GM12878 (cell line): ENCODE measurements at regions of chr3 and their contacts with region 1.

Region 1: GRCh38 chr3:120245386-120245785 is 39.6 kb downstream of the GPR156 start:
- DNase-seq: no peak
- ATAC-seq: no peak
- H3K4me3 ChIP-seq: no peak overlapping the region
- H3K27ac ChIP-seq: no peak overlapping the region
- H3K4me1 ChIP-seq: no peaks in the 10 kb centered on the region
- H3K27me3 ChIP-seq: no peaks in the 10 kb centered on the region
- CTCF ChIP-seq: no peak
- EP300 ChIP-seq: no peak
- POLR2A ChIP-seq: no peak
- RAD21 ChIP-seq: no peak

Region 2: GRCh38 chr3:120357807-120358206 is 112.4 kb after region 1 on chr3:
- CTCF ChIA-PET with region 1: interaction called, 8 read pairs
- POLR2A ChIA-PET with region 1: no interaction called
- RAD21 ChIA-PET with region 1: interaction called, 6 read pairs
- SMC1A ChIA-PET with region 1: interaction called, 4 read pairs
- in situ Hi-C with region 1: no loop called
- intact Hi-C with region 1: loop called (anchors 1 kb)
- DNase-seq: no peak
- ATAC-seq: peak; percentile 40; the same call in 1 of the 3 replicates
- H3K4me3 ChIP-seq: no peak overlapping the region
- H3K27ac ChIP-seq: no peak overlapping the region
- H3K4me1 ChIP-seq: no peaks in the 10 kb centered on the region
- H3K27me3 ChIP-seq: peaks cover 0 to 2% of the 10 kb centered on the region in 2 experiments; a peak in 1 of 4 replicates
- CTCF ChIP-seq: peak in 1 of 3 experiments; percentile 27; a peak in 1 of 6 replicates
- EP300 ChIP-seq: no peak
- POLR2A ChIP-seq: no peak
- RAD21 ChIP-seq: 0 out of 2 replicates have a peak, but pooled peaks have one; percentile 27

Region 3: DNA sequence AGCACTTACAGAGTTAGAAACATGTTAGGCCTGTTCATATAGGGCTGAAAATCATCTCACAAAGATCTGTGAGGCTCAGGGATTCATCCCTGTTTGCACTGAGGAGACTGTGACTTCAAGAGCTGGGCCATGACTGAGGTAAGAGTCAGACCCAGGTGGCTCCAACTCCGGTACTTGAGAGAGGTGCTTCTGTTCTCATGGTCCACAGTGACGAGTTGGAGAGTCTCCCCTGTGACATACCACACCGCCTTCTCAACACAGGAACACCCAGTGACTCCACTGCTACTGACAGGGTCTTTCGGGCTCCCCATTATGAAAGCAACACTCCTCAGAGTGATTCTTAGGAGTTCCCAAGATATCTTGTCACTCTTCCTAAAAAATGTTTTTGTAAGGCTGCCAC is 178.0 kb after region 1 on chr3:
- CTCF ChIA-PET with region 1: interaction called, 210 read pairs
- POLR2A ChIA-PET with region 1: no interaction called
- RAD21 ChIA-PET with region 1: interaction called, 75 read pairs
- SMC1A ChIA-PET with region 1: interaction called, 90 read pairs
- in situ Hi-C with region 1: no loop called
- intact Hi-C with region 1: no loop called
- DNase-seq: no peak
- ATAC-seq: no peak
- H3K4me3 ChIP-seq: no peak overlapping the region
- H3K27ac ChIP-seq: no peak overlapping the region
- H3K4me1 ChIP-seq: no peaks in the 10 kb centered on the region
- H3K27me3 ChIP-seq: no peaks in the 10 kb centered on the region; a peak in 2 of 4 replicates
- CTCF ChIP-seq: no peak
- EP300 ChIP-seq: no peak
- POLR2A ChIP-seq: no peak
- RAD21 ChIP-seq: no peak

Region 4: DNA sequence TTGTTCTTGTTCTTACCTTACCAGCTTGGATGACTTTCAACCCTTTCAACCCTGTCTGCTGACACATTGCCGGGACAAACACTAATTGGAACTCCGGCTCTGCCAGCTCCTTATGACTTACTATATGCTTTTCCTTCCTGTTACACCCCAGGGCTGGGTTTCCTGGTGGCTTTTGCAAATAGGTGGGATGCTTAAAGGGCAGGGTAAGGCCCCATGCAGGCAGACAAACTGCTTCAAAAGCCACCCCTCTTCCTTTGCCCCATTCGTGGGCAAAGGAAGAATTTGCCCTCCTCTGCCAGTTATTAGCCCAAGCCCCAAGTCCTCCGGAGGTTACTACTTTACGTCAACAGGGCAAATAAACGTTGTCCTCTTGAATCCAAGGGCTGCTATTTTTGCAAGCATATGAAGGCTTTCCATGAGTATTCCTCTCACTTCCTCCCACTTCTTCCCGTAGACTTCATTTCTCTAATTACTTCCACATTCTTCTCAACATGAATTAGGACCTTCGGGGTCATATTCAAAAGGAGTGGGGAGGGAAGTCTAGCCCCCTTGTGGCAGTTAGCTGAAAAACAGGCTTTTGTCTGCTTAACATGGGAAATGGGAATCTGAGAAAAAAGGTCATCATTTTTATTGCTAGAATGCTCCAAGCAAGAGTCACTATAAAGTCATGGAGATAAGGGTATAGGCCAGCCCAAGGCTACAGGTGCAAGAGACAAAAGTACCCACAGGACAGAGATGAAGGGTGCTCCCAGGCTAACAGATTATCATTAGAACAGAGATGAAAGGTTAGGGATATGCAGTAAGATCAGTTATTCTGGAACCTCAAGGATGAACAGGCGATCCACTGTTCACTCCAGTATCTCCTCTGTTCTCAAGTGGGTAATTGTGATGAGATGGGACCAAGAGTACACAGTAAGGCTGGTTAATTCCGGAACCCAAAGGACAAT is 261.7 kb after region 1 on chr3:
- CTCF ChIA-PET with region 1: interaction called, 3 read pairs
- POLR2A ChIA-PET with region 1: no interaction called
- RAD21 ChIA-PET with region 1: no interaction called
- SMC1A ChIA-PET with region 1: no interaction called
- in situ Hi-C with region 1: no loop called
- intact Hi-C with region 1: loop called (anchors 1 kb)
- DNase-seq: no peak
- ATAC-seq: peak; percentile 59; the same call in 2 of the 3 replicates
- H3K4me3 ChIP-seq: no peak overlapping the region
- H3K27ac ChIP-seq: no peak overlapping the region
- H3K4me1 ChIP-seq: no peaks in the 10 kb centered on the region
- H3K27me3 ChIP-seq: no peaks in the 10 kb centered on the region; a peak in 1 of 4 replicates
- CTCF ChIP-seq: peak; percentile 39 to 66 (median 63)
- EP300 ChIP-seq: no peak
- POLR2A ChIP-seq: no peak
- RAD21 ChIP-seq: peak; percentile 30

Region 5: DNA sequence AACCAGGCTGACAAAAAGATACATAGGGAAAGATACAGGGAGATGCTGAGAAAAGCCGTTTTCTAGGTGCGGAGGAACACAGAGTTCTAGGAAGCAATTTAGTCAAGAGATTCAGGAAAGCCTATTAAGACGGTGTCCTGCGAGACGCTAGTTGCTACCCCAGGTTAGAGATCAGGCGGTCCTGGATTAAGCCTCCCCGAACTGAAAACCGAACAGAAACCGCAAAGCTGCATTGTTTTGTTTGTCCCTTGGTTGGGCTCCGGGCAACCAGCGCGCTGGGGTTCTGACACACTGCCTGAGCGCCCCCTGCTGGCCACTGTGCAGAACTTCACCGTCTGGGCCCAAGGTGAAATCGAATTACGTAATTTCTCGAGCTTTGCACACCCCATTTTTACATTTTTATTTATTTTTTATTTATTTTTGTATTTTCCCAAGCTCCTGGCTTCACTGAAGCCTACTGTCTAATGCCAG is 313.4 kb after region 1 on chr3:
- CTCF ChIA-PET with region 1: interaction called, 55 read pairs
- POLR2A ChIA-PET with region 1: no interaction called
- RAD21 ChIA-PET with region 1: interaction called, 24 read pairs
- SMC1A ChIA-PET with region 1: interaction called, 20 read pairs
- in situ Hi-C with region 1: loop called (anchors 5 kb)
- intact Hi-C with region 1: loop called (anchors 1 kb)
- DNase-seq: peak; percentile 33
- ATAC-seq: peak; percentile 93
- H3K4me3 ChIP-seq: peak overlapping the region; percentile 55; the same call in 1 of the 2 replicates
- H3K27ac ChIP-seq: no peak overlapping the region
- H3K4me1 ChIP-seq: peaks cover 3% of the 10 kb centered on the region; the same call in 1 of the 2 replicates
- H3K27me3 ChIP-seq: no peaks in the 10 kb centered on the region
- CTCF ChIP-seq: peak; percentile 88 to 95 (median 95)
- EP300 ChIP-seq: peak in 1 of 2 experiments; percentile 43; a peak in 1 of 4 replicates
- POLR2A ChIP-seq: no peak
- RAD21 ChIP-seq: peak; percentile 84